ENCODE measurements at regions of chr1 and their contacts with region 1.

Region 1: GRCh38 chr1:199123615-199124014 is 484.8 kb downstream of the PTPRC start:
- DNase-seq: no peak
- H3K4me3 ChIP-seq: no peak overlapping the region
- H3K27ac ChIP-seq: no peak overlapping the region
- H3K4me1 ChIP-seq: no peaks in the 10 kb centered on the region
- H3K27me3 ChIP-seq: no peaks in the 10 kb centered on the region
- CTCF ChIP-seq: no peak

Region 2: DNA sequence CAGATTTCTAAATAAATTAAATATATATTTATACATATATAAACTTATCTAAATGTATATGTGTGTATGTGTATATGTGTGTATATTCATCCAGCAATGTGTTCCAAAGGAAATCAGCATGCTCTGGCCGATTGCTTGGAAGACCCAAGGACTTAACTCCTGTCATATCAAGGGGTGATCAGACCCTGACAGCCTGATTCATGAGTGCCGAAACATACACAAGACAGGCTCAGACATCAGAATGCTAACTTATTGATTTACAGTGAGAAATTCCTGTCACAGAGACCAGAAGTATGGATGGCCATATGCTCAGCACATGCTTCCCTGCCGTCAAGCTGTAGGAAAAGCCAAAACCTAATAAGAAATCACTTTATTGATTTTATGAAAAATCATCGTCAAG is 358.8 kb after region 1 on chr1:
- CTCF ChIA-PET with region 1: no interaction called
- POLR2A ChIA-PET with region 1: no interaction called
- intact Hi-C with region 1: no loop called
- DNase-seq: no peak
- H3K4me3 ChIP-seq: no peak overlapping the region
- H3K27ac ChIP-seq: no peak overlapping the region
- H3K4me1 ChIP-seq: no peaks in the 10 kb centered on the region
- H3K27me3 ChIP-seq: no peaks in the 10 kb centered on the region
- CTCF ChIP-seq: no peak

Region 3: DNA sequence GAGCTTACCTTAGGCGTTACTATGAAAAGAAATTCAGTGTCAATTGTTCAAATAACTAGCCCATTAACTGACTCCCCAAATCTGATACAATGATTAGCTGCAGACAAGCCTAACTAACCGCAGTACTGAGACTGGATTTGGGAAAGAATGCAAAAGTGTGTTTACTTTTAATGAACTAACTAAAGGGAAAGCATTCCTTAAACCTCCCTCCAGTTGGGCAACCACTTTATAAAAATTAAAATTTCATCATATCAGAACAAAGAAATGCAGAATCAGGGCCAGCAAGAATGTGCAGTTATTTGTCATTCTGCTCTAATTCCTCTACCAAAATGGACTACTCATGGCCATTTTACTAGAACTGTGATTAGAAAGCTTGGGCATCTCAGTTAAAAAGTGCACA is 892.2 kb after region 1 on chr1:
- CTCF ChIA-PET with region 1: interaction called, 15 read pairs
- POLR2A ChIA-PET with region 1: no interaction called
- intact Hi-C with region 1: no loop called
- DNase-seq: peak in 1 of 2 experiments; percentile 52
- H3K4me3 ChIP-seq: no peak overlapping the region
- H3K27ac ChIP-seq: no peak overlapping the region
- H3K4me1 ChIP-seq: no peaks in the 10 kb centered on the region
- H3K27me3 ChIP-seq: no peaks in the 10 kb centered on the region
- CTCF ChIP-seq: no peak